ENCODE measurements at regions of chr3 and their contacts with region 1.

Region 1: GRCh38 chr3:183285828-183286457 is 32.9 kb downstream of the B3GNT5 start:
- DNase-seq: peak; percentile 78 to 98 (median 88)
- ATAC-seq: peak; percentile 91
- H3K4me3 ChIP-seq: peak overlapping the region in 1 of 2 experiments; percentile 6
- H3K4me3 Mint-ChIP-seq: peak overlapping the region; percentile 58
- H3K27ac ChIP-seq: peak overlapping the region; percentile 2 to 90
- H3K27ac Mint-ChIP-seq: peak overlapping the region; percentile 95
- H3K4me1 ChIP-seq: peaks cover 9% of the 10 kb centered on the region
- H3K4me1 Mint-ChIP-seq: peaks cover 24% of the 10 kb centered on the region
- H3K27me3 ChIP-seq: no peaks in the 10 kb centered on the region
- H3K27me3 Mint-ChIP-seq: no peaks in the 10 kb centered on the region
- CTCF ChIP-seq: no peak

Region 2: GRCh38 chr3:183161552-183162336 is 124.2 kb before region 1 on chr3:
- CTCF ChIA-PET with region 1: no interaction called
- POLR2A ChIA-PET with region 1: interaction called, 3 read pairs
- intact Hi-C with region 1: loop called in 1 of 2 experiments (anchors 1 kb)
- DNase-seq: peak in 2 of 9 experiments; percentile 29 to 52
- ATAC-seq: no peak
- H3K4me3 ChIP-seq: peak overlapping the region; percentile 57 to 87
- H3K4me3 Mint-ChIP-seq: peak overlapping the region; percentile 84
- H3K27ac ChIP-seq: peak overlapping the region in 1 of 2 experiments; percentile 43
- H3K27ac Mint-ChIP-seq: peak overlapping the region; percentile 42
- H3K4me1 ChIP-seq: peaks cover 12% of the 10 kb centered on the region
- H3K4me1 Mint-ChIP-seq: peaks cover 9% of the 10 kb centered on the region
- H3K27me3 ChIP-seq: no peaks in the 10 kb centered on the region
- H3K27me3 Mint-ChIP-seq: no peaks in the 10 kb centered on the region
- CTCF ChIP-seq: no peak

Region 3: DNA sequence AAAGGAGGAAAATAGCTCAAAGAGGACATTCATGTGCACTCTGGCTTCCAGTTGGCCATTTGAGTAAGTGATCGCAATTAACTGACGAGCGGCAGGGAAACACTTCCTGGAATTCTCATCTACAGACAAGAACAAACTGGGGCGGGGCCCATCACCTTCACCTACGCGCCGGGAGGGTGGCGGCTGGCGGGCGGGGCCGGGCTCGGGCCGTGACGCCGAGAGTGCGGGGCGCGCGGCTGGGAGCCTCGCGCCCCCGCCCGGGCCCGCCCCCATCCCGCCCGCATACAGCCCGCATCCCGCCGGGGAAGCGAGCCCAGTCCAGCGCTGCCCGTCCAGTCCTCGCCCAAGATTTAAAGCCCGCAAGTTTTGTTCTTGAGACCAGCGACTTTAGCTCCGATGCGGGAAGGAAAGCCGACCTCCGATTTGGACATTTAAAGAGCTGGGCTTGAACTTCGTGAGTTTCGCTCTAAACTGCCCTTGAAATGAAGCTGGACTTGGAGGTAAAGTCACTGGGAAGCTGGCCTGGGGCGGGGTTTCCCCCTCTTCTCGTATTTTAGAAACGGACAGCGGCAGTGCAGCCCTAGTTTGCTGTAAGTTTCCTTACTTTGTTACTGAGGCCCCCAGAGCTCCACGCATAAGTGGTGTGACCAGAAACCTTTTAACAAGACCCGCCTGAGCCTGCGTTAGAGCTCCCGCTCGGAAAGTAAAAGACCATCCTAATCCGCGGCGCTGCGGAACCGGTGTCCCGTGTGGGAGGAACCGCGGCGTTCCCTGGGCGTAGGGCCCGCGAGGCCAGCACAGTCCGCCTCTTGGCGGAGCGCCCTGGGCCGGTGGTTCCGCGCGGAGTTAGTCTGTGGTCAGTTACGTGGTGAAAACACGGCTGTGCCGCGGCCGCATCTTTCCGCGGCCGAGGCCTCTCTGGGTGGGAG is 32.7 kb before region 1 on chr3 and contains the start of gene B3GNT5:
- CTCF ChIA-PET with region 1: no interaction called
- POLR2A ChIA-PET with region 1: no interaction called
- intact Hi-C with region 1: loop called in 1 of 2 experiments (anchors 1 kb)
- DNase-seq: peak in 5 of 9 experiments; percentile 26 to 49 (median 30)
- ATAC-seq: peak; percentile 55
- H3K4me3 ChIP-seq: peak within 1 kb of the TSS; percentile 57 to 58
- H3K4me3 Mint-ChIP-seq: peak within 1 kb of the TSS; percentile 75
- H3K27ac ChIP-seq: no peak within 1 kb of the TSS
- H3K27ac Mint-ChIP-seq: no peak within 1 kb of the TSS
- H3K4me1 ChIP-seq: peaks cover 5% of the 10 kb centered on the region
- H3K4me1 Mint-ChIP-seq: peaks cover 8% of the 10 kb centered on the region
- H3K27me3 ChIP-seq: peaks cover 12 to 18% of the 10 kb centered on the region in 2 experiments
- H3K27me3 Mint-ChIP-seq: peaks cover 30% of the 10 kb centered on the region
- CTCF ChIP-seq: no peak
- total RNA-seq, gene B3GNT5: 1.1 to 1.2 TPM

Region 4: GRCh38 chr3:183275418-183275817 is 10.5 kb before region 1 on chr3:
- CTCF ChIA-PET with region 1: no interaction called
- POLR2A ChIA-PET with region 1: no interaction called
- intact Hi-C with region 1: no loop called
- DNase-seq: peak in 2 of 9 experiments; percentile 29 to 45
- ATAC-seq: no peak
- H3K4me3 ChIP-seq: no peak overlapping the region
- H3K4me3 Mint-ChIP-seq: no peak overlapping the region
- H3K27ac ChIP-seq: no peak overlapping the region
- H3K27ac Mint-ChIP-seq: no peak overlapping the region
- H3K4me1 ChIP-seq: no peaks in the 10 kb centered on the region
- H3K4me1 Mint-ChIP-seq: peaks cover 5% of the 10 kb centered on the region
- H3K27me3 ChIP-seq: no peaks in the 10 kb centered on the region
- H3K27me3 Mint-ChIP-seq: no peaks in the 10 kb centered on the region
- CTCF ChIP-seq: no peak

Region 5: GRCh38 chr3:183349421-183350157 is 63.6 kb after region 1 on chr3:
- CTCF ChIA-PET with region 1: no interaction called
- POLR2A ChIA-PET with region 1: no interaction called
- intact Hi-C with region 1: loop called (anchors 1 kb)
- DNase-seq: peak in 3 of 9 experiments; percentile 8 to 72 (median 55)
- ATAC-seq: peak; percentile 41
- H3K4me3 ChIP-seq: peak overlapping the region in 1 of 2 experiments; percentile 1
- H3K4me3 Mint-ChIP-seq: peak overlapping the region; percentile 73
- H3K27ac ChIP-seq: peak overlapping the region; percentile 24 to 26
- H3K27ac Mint-ChIP-seq: peak overlapping the region; percentile 95
- H3K4me1 ChIP-seq: peaks cover 21% of the 10 kb centered on the region
- H3K4me1 Mint-ChIP-seq: peaks cover 28% of the 10 kb centered on the region
- H3K27me3 ChIP-seq: no peaks in the 10 kb centered on the region
- H3K27me3 Mint-ChIP-seq: peaks cover 2% of the 10 kb centered on the region
- CTCF ChIP-seq: no peak

Region 6: GRCh38 chr3:183515968-183516851 is 230.3 kb after region 1 on chr3:
- CTCF ChIA-PET with region 1: no interaction called
- POLR2A ChIA-PET with region 1: no interaction called
- intact Hi-C with region 1: loop called in 1 of 2 experiments (anchors 5 kb)
- DNase-seq: peak; percentile 34 to 91 (median 71)
- ATAC-seq: peak; percentile 72
- H3K4me3 ChIP-seq: no peak overlapping the region
- H3K4me3 Mint-ChIP-seq: peak overlapping the region; percentile 24
- H3K27ac ChIP-seq: peak overlapping the region; percentile 56 to 68
- H3K27ac Mint-ChIP-seq: peak overlapping the region; percentile 92
- H3K4me1 ChIP-seq: peaks cover 66% of the 10 kb centered on the region
- H3K4me1 Mint-ChIP-seq: peaks cover 76% of the 10 kb centered on the region
- H3K27me3 ChIP-seq: no peaks in the 10 kb centered on the region
- H3K27me3 Mint-ChIP-seq: no peaks in the 10 kb centered on the region
- CTCF ChIP-seq: peak; percentile 31